ENCODE measurements at regions of chr17 and their contacts with region 1.

Region 1: GRCh38 chr17:63406689-63407330 is 39.3 kb downstream of the CYB561 start:
- DNase-seq: peak; percentile 82
- H3K4me3 Mint-ChIP-seq: no peak overlapping the region
- H3K27ac Mint-ChIP-seq: no peak overlapping the region
- H3K4me1 Mint-ChIP-seq: peaks cover 2% of the 10 kb centered on the region
- H3K27me3 Mint-ChIP-seq: peaks cover 2% of the 10 kb centered on the region

Region 2: DNA sequence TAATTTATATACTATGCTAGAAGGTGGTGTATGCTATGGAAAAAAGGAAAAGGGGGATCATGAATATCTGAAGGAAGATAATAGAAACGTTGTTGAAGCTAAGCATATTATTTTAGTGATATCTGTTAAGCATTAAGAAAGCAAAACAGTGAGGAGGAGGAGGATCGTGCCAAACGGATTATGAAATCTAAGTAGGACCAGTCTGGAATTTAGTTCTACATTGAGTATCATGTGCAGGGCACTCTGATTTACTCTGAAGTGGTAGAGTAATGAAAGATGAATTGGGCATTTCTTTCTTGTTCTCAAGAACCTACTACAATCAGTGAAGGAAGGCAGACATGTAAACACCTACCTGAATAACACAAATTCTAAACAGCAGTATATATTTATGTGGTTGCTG is 156.0 kb before region 1 on chr17:
- CTCF ChIA-PET with region 1: no interaction called
- POLR2A ChIA-PET with region 1: interaction called, 17 read pairs
- DNase-seq: no peak
- H3K4me3 Mint-ChIP-seq: no peak overlapping the region
- H3K27ac Mint-ChIP-seq: no peak overlapping the region
- H3K4me1 Mint-ChIP-seq: no peaks in the 10 kb centered on the region
- H3K27me3 Mint-ChIP-seq: no peaks in the 10 kb centered on the region

Region 3: GRCh38 chr17:63262751-63263476 is 143.9 kb before region 1 on chr17:
- CTCF ChIA-PET with region 1: no interaction called
- POLR2A ChIA-PET with region 1: no interaction called
- DNase-seq: no peak
- H3K4me3 Mint-ChIP-seq: no peak overlapping the region
- H3K27ac Mint-ChIP-seq: no peak overlapping the region
- H3K4me1 Mint-ChIP-seq: no peaks in the 10 kb centered on the region
- H3K27me3 Mint-ChIP-seq: no peaks in the 10 kb centered on the region

Region 4: DNA sequence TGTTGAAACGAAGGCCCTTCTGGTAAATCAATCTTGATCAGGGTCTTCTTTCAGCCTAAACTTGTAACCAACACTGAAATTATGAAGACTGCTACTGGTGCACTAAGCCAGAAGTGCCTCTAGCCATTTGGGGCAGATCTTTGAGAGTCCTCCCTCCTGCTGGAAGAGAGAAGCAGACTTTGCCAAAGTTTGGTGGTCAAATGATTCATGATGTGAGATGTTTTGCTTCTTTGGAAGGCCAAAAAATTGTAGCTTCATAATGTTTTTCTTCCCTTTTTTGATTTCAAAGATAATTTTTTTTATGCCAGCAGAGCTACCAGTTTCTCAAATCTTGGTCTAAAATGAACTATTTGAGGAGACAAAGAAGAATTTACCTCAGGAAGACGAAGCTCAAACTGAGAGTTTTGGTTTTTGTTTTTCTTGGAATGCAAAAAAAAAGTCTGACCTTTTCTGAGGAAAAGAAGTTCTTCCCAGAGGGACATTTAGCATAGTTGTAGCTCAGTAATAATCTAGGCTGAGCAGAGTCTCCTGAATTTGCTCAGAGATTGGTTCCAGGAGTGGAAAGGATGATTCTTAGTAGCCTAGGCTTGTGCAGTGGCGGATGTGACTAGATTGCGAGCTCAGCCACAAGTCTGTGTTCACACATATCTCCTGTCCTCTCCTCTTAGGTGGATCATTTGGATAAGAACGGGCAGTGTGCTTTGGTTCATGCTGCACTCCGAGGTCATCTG is 11.6 kb before region 1 on chr17:
- CTCF ChIA-PET with region 1: interaction called, 10 read pairs
- POLR2A ChIA-PET with region 1: no interaction called
- DNase-seq: no peak
- H3K4me3 Mint-ChIP-seq: no peak overlapping the region
- H3K27ac Mint-ChIP-seq: no peak overlapping the region
- H3K4me1 Mint-ChIP-seq: peaks cover 5% of the 10 kb centered on the region
- H3K27me3 Mint-ChIP-seq: no peaks in the 10 kb centered on the region

Region 5: GRCh38 chr17:63419949-63420867 is 13.4 kb after region 1 on chr17:
- CTCF ChIA-PET with region 1: interaction called, 25 read pairs
- POLR2A ChIA-PET with region 1: no interaction called
- DNase-seq: peak; percentile 73
- H3K4me3 Mint-ChIP-seq: peak overlapping the region; percentile 24
- H3K27ac Mint-ChIP-seq: peak overlapping the region; percentile 92
- H3K4me1 Mint-ChIP-seq: peaks cover 25% of the 10 kb centered on the region
- H3K27me3 Mint-ChIP-seq: peaks cover 2% of the 10 kb centered on the region

Region 6: GRCh38 chr17:63425482-63425881 is 18.7 kb after region 1 on chr17:
- CTCF ChIA-PET with region 1: interaction called, 10 read pairs
- POLR2A ChIA-PET with region 1: no interaction called
- DNase-seq: peak; percentile 81
- H3K4me3 Mint-ChIP-seq: no peak overlapping the region
- H3K27ac Mint-ChIP-seq: no peak overlapping the region
- H3K4me1 Mint-ChIP-seq: peaks cover 53% of the 10 kb centered on the region
- H3K27me3 Mint-ChIP-seq: peaks cover 2% of the 10 kb centered on the region